Body of pancreas (tissue), 4 donors: ENCODE measurements at regions of chr16 and their contacts with region 1.

Region 1: DNA sequence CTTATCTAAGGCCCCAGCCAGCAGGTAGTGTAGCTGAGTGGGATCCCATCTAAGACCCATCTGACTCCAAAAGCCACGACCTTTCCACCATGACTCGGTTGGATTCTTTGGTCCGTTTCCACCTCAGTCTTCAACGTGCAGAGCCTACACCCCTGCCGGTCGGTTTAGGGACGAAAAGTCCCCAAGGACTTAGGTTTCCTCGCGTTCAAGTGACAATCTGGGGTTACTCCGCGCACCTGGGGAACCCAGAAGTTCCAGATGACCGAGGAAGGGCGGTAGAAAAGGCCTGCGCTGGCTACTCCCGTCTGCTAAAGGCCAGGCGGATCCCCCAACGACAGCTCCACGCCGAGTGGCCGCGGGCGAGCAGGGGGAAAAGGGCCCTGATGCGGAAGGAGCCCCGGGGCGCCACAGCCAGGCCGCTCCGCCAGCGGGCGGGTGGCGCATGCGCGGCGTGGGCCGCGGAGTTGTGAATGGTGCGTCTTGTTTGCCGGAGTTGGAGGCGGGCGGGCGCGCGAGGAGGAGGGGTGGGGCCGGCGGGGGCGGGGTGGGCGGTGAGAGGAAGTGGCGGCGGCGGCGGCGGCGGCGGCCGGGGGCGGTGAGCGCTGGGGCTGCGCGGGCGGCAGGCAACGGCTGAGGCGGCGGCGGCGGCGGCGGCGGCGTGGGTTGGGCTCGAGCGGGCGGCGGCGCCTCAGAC is at the start of gene CBFB:
- DNase-seq: peak; percentile 91 to 95 (median 94)
- ATAC-seq: peak; percentile 93
- H3K4me3 ChIP-seq: peak within 1 kb of the TSS; percentile 24 to 76
- H3K27ac ChIP-seq: peak within 1 kb of the TSS; percentile 89 to 98 (median 94)
- H3K4me1 ChIP-seq: peaks cover 24% of the 10 kb centered on the region
- H3K27me3 ChIP-seq: no peaks in the 10 kb centered on the region
- CTCF ChIP-seq: peak in 3 of 7 experiments; percentile 32 to 43 (median 37)
- POLR2A ChIP-seq: peak; percentile 86 to 94 (median 92)
- total RNA-seq, gene CBFB: 28.0 to 41.9 TPM

Region 2: DNA sequence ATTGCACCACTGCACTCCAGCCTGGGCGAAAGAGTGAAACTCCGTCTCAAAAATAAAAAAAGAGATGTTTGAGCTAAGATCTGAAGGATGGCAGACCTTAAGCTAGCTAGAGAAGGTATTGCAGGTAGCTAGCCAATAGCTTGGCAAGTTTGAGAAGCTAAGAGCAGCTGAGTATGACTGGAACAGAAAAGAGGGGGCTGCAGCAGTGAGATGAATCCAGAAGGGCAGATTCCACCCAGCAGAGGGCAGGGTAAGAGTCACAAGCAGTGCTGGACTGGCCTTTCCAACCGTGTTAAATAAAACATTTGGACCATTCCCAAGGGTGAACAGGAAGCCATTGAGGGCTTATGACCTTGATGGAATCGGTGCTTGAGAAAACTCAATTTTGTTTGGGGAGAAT is 75.4 kb after region 1 on chr16:
- intact Hi-C with region 1: loop called (anchors 5 kb)
- DNase-seq: peak; percentile 17 to 34 (median 31)
- ATAC-seq: peak; percentile 64
- H3K4me3 ChIP-seq: no peak overlapping the region
- H3K27ac ChIP-seq: no peak overlapping the region
- H3K4me1 ChIP-seq: peaks cover 8% of the 10 kb centered on the region
- H3K27me3 ChIP-seq: no peaks in the 10 kb centered on the region
- CTCF ChIP-seq: peak in 5 of 7 experiments; percentile 14 to 40 (median 30)
- POLR2A ChIP-seq: no peak

Region 3: DNA sequence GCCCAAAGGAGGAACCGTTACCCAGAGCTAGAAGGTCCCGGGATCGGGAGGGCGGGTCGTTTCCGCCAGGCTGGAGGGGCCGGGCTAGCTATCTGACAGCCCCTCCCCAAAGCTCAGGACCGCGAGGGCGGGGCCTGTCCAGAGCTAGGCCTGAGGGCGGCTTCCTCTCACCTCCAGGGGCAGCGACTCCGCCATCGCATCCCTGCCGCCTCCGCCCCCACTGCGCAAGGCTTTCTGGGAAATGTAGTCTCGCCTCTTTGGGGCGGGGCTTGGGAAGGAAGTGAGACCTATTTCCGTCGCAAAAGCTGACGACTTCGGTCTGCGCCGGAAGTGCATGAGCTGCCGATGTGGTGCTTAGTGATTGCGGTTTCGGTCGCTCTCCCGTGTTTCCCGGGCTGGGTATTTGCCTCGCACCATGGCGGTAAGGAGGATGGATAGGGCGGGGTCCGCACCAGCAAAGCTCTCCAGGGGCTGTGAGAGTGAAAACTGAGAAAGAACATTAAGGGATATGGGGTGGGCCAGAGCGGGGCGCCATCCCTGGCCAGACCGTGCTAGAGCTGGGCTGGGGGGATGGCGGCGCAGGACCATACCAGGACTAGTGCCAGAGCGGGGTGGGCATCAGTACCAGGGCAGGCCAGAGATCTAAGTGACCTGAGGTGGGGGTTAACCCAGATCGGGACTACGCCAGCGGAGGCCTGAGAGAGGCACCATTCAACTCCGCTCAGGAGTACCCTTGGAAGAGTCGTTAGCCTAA is 198.3 kb after region 1 on chr16 and contains the start of gene TMEM208:
- intact Hi-C with region 1: no loop called
- DNase-seq: peak; percentile 97 to 98 (median 98)
- ATAC-seq: peak; percentile 97
- H3K4me3 ChIP-seq: peak within 1 kb of the TSS; percentile 47 to 91
- H3K27ac ChIP-seq: peak within 1 kb of the TSS; percentile 35 to 81 (median 62)
- H3K4me1 ChIP-seq: peaks cover 25% of the 10 kb centered on the region
- H3K27me3 ChIP-seq: no peaks in the 10 kb centered on the region
- CTCF ChIP-seq: peak in 4 of 7 experiments; percentile 38 to 49 (median 42)
- POLR2A ChIP-seq: peak; percentile 26 to 83 (median 81)
- total RNA-seq, gene TMEM208: 35.8 to 48.1 TPM